CD14-positive monocyte (primary cell): ENCODE measurements at regions of chr2 and their contacts with region 1.

Region 1: GRCh38 chr2:43038039-43038707 is 188.2 kb downstream of the ZFP36L2 start:
- DNase-seq: no peak
- H3K4me3 ChIP-seq: no peak overlapping the region
- H3K4me3 Mint-ChIP-seq: no peak overlapping the region
- H3K27ac ChIP-seq: no peak overlapping the region
- H3K27ac Mint-ChIP-seq: no peak overlapping the region
- H3K4me1 ChIP-seq: peaks cover 21 to 31% of the 10 kb centered on the region in 2 donors
- H3K4me1 Mint-ChIP-seq: peaks cover 28% of the 10 kb centered on the region
- H3K27me3 ChIP-seq: no peaks in the 10 kb centered on the region
- H3K27me3 Mint-ChIP-seq: peaks cover 0 to 4% (median 0%) of the 10 kb centered on the region in 3 donors
- CTCF ChIP-seq: no peak

Region 2: DNA sequence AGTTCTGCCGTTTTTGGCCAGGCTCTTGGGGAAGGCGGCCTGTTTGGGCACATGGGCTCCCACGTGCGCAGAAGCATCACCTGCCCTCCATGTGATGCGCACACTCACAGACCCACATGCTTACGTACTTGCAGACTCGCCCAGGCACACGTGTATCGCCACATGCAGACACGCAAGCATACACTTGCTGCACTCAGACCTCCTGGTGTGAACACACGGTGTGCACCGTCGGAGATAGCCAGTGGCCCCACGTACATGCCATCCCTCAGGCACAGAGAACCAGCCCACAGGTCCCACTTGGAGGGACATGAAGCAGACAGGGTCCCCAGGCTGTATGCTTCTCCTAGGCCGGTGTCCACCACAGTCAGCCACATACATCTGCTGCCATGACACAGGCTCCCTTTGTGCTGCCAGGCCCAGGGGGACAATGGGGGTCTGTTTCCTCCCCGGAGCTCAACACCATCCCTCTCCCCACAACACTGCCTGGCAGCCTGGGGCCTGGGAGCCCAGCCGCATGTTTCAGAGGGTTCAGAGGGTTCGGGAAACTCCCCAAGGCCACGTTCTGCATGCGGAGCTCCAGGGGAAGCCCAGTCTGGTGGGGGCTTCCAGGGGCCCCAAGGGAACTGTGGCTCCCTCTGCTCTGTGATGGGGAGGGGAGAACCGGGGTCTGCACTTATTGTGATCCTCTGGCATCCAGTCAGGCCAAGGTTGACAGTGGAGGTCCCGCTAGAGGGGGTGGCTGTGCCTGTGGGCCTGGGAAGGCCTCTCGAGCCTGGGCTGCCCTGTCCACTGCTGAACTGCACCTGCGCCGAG is 37.7 kb before region 1 on chr2:
- intact Hi-C with region 1: no loop called
- DNase-seq: no peak
- H3K4me3 ChIP-seq: no peak overlapping the region
- H3K4me3 Mint-ChIP-seq: no peak overlapping the region
- H3K27ac ChIP-seq: no peak overlapping the region
- H3K27ac Mint-ChIP-seq: no peak overlapping the region
- H3K4me1 ChIP-seq: peaks cover 10 to 26% of the 10 kb centered on the region in 2 donors
- H3K4me1 Mint-ChIP-seq: peaks cover 31% of the 10 kb centered on the region
- H3K27me3 ChIP-seq: no peaks in the 10 kb centered on the region
- H3K27me3 Mint-ChIP-seq: peaks cover 0 to 6% (median 2%) of the 10 kb centered on the region in 3 donors
- CTCF ChIP-seq: no peak

Region 3: DNA sequence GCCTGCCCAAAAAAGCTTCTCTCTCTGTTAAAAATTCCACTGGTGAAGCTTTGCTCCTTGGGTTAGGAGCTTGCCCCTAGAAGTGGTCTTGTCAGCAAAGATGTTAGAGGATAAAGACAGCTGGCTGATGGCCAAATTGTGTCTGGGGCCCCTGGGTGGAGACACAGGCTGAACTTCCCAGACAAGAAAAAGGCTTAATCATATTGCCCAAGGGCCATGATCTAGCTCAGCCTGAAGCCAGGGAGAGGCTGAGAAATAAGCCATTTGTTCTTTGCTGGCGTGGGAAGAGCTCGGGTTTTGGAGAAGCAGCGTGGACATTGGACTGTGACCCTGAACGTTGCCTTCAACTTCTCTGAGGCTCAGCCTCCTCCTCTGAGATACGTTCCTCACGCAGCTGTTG is 35.2 kb after region 1 on chr2:
- intact Hi-C with region 1: loop called in 1 of 2 experiments (anchors 5 kb)
- DNase-seq: peak in 2 of 3 donors; percentile 19 to 29
- H3K4me3 ChIP-seq: peak overlapping the region in 1 of 3 experiments; percentile 42
- H3K4me3 Mint-ChIP-seq: peak overlapping the region; percentile 40 to 55
- H3K27ac ChIP-seq: peak overlapping the region in 1 of 2 donors; percentile 49
- H3K27ac Mint-ChIP-seq: peak overlapping the region in 3 of 7 donors; percentile 7 to 57 (median 42)
- H3K4me1 ChIP-seq: peaks cover 24 to 32% of the 10 kb centered on the region in 2 donors
- H3K4me1 Mint-ChIP-seq: peaks cover 53% of the 10 kb centered on the region
- H3K27me3 ChIP-seq: no peaks in the 10 kb centered on the region
- H3K27me3 Mint-ChIP-seq: peaks cover 2 to 7% (median 3%) of the 10 kb centered on the region in 3 donors
- CTCF ChIP-seq: no peak